Right ventricle myocardium superior (tissue), 1 donor: ENCODE measurements at regions of chr17 and their contacts with region 1.

Region 1: DNA sequence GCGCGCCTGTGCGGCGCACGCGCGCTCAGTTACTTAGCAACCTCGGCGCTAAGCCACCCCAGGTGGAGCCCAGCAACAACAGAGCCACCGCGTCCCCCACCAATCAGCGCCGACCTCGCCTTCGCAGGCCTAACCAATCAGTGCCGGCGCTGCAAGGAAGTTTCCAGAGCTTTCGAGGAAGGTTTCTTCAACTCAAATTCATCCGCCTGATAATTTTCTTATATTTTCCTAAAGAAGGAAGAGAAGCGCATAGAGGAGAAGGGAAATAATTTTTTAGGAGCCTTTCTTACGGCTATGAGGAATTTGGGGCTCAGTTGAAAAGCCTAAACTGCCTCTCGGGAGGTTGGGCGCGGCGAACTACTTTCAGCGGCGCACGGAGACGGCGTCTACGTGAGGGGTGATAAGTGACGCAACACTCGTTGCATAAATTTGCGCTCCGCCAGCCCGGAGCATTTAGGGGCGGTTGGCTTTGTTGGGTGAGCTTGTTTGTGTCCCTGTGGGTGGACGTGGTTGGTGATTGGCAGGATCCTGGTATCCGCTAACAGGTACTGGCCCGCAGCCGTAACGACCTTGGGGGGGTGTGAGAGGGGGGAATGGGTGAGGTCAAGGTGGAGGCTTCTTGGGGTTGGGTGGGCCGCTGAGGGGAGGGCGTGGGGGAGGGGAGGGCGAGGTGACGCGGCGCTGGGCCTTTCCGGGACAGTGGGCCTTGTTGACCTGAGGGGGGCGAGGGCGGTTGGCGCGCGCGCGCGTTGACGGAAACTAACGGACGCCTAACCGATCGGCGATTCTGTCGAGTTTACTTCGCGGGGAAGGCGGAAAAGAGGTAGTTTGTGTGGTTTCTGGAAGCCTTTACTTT is at the start of gene UBB:
- DNase-seq: peak; percentile 98
- ATAC-seq: peak; percentile 99
- total RNA-seq, gene UBB: 1,408 TPM

Region 2: GRCh38 chr17:16439811-16440753 is 59.2 kb after region 1 on chr17:
- intact Hi-C with region 1: loop called (anchors 5 kb)
- DNase-seq: no peak
- ATAC-seq: no peak